ENCODE measurements at regions of chr1 and their contacts with region 1.

Region 1: DNA sequence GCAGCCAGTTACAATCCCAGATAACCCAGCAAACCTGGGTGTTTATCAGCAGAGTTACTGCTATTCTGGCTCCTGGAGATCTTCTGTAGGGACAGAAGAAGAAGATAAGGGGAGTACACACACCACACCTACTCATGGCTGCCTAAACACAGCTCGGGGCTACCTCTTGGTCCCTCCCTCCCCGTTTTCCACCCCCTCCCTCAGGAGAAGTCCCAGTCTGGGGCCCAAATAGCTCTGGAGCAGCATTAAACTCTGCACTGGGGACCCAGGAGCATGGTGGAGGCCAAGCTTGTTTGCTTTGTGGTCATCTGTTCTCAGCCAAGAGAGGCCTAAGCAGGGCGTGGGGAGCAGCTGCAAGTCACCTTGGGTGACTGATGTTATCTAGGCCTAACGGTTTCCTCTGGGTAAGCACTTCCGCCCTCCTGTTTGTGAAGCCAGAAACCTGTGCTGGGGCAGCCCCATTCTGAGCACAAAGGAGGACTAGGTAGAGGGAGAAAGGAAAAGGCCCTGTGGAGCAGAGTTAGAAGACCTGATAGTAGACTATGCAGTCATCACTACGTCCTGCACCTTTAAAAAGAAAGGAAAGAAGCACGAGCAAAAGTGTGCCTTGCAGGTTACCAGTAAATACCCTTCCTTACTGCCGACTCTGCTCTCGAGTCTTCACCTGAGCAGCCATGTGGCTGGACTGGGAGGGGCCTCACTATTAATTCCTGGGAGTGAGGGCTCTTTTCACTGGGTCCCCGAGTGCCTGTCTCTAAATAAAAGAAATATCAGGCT is 2.0 kb upstream of the RCSD1 start:
- DNase-seq: peak; percentile 95
- H3K4me3 Mint-ChIP-seq: peak overlapping the region; percentile 94
- H3K27ac Mint-ChIP-seq: peak overlapping the region; percentile 92
- H3K4me1 Mint-ChIP-seq: peaks cover 57% of the 10 kb centered on the region
- H3K27me3 Mint-ChIP-seq: no peaks in the 10 kb centered on the region

Region 2: DNA sequence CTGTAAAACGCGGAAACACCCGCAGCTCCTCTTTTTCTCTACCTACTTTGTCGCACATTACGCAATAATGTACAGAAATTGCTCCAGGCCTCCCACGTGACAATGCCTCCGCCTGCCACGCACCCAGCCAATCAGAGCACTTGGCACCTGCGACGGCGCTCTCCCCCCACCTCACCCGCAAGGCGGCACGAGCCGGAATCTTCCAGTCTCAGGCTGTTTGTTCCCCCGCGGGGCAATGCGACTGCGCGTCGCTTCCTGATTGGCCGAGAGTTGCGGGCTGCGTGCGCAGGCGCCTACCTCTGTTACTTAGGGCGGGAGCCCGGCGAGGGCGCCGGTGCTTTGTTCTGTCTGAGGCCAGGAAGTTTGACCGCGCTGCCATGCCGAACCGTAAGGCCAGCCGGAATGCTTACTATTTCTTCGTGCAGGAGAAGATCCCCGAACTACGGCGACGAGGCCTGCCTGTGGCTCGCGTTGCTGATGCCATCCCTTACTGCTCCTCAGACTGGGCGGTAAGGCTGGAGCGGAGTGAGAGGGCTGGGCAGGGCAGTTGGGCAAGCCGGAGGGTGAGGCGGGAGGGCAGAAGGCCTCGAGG is 639.0 kb before region 1 on chr1 and contains the start of gene MAEL:
- intact Hi-C with region 1: no loop called
- DNase-seq: no peak
- H3K4me3 Mint-ChIP-seq: no peak within 1 kb of the TSS
- H3K27ac Mint-ChIP-seq: no peak within 1 kb of the TSS
- H3K4me1 Mint-ChIP-seq: no peaks in the 10 kb centered on the region
- H3K27me3 Mint-ChIP-seq: peaks cover 43% of the 10 kb centered on the region
- total RNA-seq, gene MAEL: not detected in 2 replicates

Region 3: DNA sequence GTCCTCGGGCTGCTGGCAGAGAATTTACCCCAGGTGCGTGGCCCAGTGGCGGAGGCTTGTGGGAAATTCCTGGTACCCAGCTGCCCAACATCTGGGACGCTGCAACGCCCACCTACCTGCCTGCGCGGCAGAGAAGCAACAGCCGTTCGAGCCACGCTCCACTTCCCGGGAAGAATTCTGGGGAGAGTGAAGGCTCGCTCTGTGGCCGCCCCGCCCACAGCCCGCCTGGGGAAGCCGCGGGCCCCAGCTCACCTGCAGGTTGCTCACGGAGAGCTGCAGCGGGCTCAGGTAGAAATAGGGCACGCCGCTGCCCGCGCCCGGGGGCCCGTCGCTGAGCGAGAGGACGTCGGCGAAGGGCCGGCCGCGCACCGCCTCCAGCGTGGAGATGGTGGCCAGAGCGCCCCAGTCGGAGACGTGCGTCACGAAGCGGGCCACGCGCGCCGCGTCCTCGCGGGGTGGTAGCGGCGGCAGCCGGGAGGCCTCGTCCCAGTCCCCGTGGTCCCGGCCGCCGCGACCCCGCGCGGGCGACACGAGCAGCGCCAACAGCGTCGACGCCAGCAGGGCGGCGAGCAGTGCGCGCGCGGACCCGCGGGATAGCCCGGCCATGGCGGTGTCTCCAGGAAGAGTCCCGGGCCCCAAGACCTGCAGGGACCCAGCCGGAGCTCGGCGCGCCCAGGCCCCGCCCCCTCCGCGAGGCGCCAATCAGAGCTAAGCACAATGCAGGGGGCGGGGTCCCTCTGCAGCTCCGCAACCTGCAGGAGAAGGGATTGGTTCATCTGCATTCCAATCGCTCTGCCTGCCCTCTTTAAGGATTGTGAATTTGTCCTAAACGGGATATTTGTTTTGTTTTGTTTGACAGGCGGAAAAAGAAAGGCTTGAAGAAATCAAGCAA is 74.7 kb before region 1 on chr1 and contains the start of gene CREG1:
- intact Hi-C with region 1: loop called (anchors 5 kb)
- DNase-seq: peak; percentile 98
- H3K4me3 Mint-ChIP-seq: peak within 1 kb of the TSS; percentile 88
- H3K27ac Mint-ChIP-seq: no peak within 1 kb of the TSS
- H3K4me1 Mint-ChIP-seq: peaks cover 26% of the 10 kb centered on the region
- H3K27me3 Mint-ChIP-seq: peaks cover 6% of the 10 kb centered on the region
- total RNA-seq, gene CREG1: 12.3 and 13.6 TPM in 2 replicates

Region 4: GRCh38 chr1:167563579-167564246 is 64.3 kb before region 1 on chr1:
- intact Hi-C with region 1: no loop called
- DNase-seq: no peak
- H3K4me3 Mint-ChIP-seq: no peak overlapping the region
- H3K27ac Mint-ChIP-seq: no peak overlapping the region
- H3K4me1 Mint-ChIP-seq: peaks cover 10% of the 10 kb centered on the region
- H3K27me3 Mint-ChIP-seq: peaks cover 10% of the 10 kb centered on the region

Region 5: GRCh38 chr1:167587872-167588271 is 40.2 kb before region 1 on chr1:
- intact Hi-C with region 1: no loop called
- DNase-seq: no peak
- H3K4me3 Mint-ChIP-seq: no peak overlapping the region
- H3K27ac Mint-ChIP-seq: no peak overlapping the region
- H3K4me1 Mint-ChIP-seq: peaks cover 2% of the 10 kb centered on the region
- H3K27me3 Mint-ChIP-seq: peaks cover 3% of the 10 kb centered on the region

Region 6: DNA sequence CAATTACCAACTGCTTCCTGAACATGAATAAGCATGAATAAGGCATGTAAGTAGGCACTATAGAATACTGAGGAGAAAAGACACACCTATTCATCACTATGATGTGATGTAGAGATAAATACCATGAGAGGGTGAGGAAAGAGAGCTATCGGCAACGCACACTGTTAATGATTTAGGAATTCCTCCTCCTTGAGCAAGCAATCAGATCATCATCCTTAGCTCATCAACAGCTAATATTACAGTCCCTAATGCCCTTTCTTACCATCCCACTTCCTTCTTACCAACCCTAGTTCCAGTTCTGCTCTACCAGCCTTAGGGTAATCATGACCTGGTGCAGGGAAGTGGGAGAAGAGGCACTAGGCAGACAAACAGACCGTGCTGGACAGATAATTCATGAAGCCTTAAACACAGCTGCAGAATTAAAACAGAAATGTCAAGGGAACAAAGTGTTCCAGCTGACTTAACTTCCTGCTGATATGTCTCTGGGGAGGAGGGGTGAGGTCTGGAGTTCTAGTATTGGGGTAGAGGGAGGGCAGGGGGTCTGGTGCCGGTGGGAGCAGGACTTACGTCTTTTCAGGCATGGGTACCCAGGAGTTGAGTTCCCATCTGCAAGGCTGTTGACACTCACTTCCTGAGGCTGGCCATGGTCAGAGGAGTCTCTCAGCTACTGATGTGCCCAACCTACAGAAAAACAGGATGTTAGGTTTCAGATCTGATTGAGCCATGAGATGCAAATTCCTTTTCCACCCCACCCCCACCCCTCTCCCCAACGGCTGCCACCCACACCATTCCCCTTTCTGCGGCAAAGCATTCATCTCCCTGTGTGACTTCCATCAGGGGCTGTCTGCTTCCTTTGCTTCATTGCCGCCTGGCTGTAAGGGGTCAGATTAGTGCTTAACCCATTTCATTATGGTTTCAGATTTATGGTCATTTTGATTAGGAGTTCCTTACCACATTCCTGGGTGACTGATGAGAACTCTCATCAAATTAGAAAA is 10.6 kb before region 1 on chr1:
- intact Hi-C with region 1: loop called (anchors 1 kb)
- DNase-seq: peak; percentile 78
- H3K4me3 Mint-ChIP-seq: peak overlapping the region; percentile 77
- H3K27ac Mint-ChIP-seq: peak overlapping the region; percentile 94
- H3K4me1 Mint-ChIP-seq: peaks cover 57% of the 10 kb centered on the region
- H3K27me3 Mint-ChIP-seq: no peaks in the 10 kb centered on the region

Region 7: DNA sequence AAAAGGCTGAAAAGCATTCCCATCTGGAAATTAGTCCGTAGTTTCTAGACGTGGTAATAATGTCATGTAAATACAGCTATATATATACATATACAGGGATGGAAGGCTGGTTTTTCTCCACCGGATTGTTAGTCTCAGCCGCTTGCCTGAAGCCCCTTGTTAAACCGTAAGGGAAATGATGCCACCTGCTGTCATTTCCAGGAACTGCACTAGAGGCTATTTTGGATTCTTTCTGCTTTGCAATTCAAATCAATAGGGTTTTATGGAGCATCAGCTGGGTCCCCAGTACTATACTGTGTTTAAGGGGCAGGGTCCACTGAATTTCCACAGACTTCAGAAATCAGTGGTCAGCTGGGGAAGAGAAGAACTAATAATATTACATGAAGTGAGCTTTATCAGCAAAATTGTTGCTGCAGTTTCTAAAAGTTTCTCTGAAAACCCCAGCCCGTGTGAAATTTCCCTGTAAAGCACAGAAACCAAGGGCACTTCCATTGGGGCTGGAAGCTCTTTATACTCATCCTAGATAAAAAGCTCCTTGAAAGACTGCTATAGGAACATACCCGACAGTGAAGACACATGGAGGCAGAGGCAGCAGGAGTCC is 60.0 kb after region 1 on chr1:
- intact Hi-C with region 1: loop called (anchors 2 kb)
- DNase-seq: peak; percentile 94
- H3K4me3 Mint-ChIP-seq: no peak overlapping the region
- H3K27ac Mint-ChIP-seq: peak overlapping the region; percentile 56
- H3K4me1 Mint-ChIP-seq: peaks cover 19% of the 10 kb centered on the region
- H3K27me3 Mint-ChIP-seq: no peaks in the 10 kb centered on the region